K562 (cell line): ENCODE measurements at regions of chr19 and their contacts with region 1.

Region 1: DNA sequence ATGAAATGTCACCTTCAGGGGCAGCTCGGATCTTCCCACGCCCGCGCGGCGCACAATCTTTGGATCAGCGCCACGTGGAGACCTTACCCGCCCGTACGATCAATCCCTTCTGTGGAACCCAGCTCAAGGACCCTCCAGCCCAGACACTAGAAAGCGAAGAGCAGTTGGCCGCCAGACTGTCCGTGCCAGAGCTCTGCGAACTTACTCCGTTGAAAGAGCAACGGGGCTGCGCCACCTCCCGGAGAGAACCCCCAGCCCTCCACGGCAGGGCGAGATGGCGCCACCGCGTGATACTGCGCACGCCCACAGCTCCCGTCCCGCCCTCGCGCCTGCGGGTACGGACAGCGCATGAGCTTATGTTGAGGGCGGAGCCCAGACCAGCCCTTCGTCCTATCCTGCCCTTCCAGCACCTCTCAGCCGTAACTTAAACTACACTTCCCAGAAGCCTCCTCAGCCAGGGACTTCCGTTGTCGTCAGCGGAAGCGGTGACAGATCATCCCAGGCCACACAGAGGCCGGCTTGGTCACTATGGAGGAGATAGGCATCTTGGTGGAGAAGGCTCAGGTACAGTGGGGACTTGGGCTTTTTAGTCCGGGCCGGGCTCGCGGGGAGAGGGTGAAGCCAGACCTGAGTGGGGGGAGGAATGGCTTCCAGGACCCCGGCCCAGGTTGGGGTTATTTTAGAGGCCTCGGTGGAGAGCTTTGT is at the start of gene PSMC4:
- DNase-seq: peak; percentile 95 to 99 (median 96)
- ATAC-seq: peak; percentile 99
- H3K4me3 ChIP-seq: peak within 1 kb of the TSS; percentile 84
- H3K27ac ChIP-seq: peak within 1 kb of the TSS; percentile 90
- H3K4me1 ChIP-seq: peaks cover 15 to 23% of the 10 kb centered on the region in 2 experiments
- H3K27me3 ChIP-seq: no peaks in the 10 kb centered on the region
- CTCF ChIP-seq: peak; percentile 90 to 97 (median 94)
- EP300 ChIP-seq: no peak
- POLR2A ChIP-seq: peak; percentile 94
- RAD21 ChIP-seq: peak; percentile 84 to 88
- polyA plus RNA-seq, gene PSMC4: 380 to 475 TPM

Region 2: DNA sequence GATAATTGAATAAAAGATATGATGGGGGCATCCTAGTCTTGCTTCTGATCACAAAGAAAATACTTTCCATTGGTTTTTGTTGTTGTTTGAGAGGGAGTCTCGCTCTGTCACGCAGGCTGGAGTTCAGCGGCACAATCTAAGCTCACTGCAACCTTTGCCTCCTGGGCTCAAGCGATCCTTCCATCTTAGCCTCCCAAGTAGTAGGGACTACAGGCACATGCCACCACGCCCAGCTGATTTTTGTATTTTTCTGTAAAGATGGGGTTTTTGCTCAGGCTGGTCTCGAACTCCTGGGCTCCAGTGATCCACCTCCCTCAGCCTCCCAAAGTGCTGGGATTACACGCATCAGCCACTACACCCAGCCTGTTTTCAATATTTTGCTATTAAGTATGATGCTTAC is 16.9 kb before region 1 on chr19:
- CTCF ChIA-PET with region 1: no interaction called
- POLR2A ChIA-PET with region 1: interaction called, 10 read pairs
- in situ Hi-C with region 1: no loop called
- intact Hi-C with region 1: no loop called
- DNase-seq: no peak
- ATAC-seq: no peak
- H3K4me3 ChIP-seq: no peak overlapping the region
- H3K27ac ChIP-seq: no peak overlapping the region
- H3K4me1 ChIP-seq: no peaks in the 10 kb centered on the region
- H3K27me3 ChIP-seq: peaks cover 3% of the 10 kb centered on the region in 2 experiments; a peak in 2 of 5 replicates
- CTCF ChIP-seq: no peak
- EP300 ChIP-seq: no peak
- POLR2A ChIP-seq: no peak
- RAD21 ChIP-seq: no peak

Region 3: DNA sequence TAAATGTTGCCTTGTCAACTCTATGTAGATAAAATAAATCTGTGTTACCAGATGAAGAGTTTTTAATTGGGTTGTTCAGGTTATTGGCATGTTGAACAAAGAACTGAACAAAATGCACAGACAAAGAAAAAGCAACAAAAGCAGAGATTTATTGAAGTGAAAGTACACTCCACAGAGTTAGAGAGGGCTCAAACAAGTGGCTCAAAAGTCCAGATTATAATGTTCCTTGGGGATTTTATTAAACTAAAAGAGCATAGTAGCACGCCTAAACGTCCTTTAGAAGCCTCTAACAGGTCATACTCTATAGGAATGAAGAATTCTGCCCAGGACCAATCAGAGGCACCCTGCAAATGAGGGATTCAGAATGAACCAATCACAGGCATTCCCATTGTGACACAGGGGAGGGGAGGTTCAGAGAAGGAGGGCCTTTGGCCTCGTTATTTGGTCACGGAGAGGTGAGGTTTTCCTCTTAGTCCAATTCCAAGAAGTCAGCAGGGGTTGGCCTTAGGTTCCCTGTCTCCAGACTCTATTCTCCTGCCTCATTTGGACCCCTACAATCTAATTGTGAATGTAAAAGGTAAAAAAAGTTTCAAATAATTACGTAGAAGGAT is 13.0 kb after region 1 on chr19:
- CTCF ChIA-PET with region 1: no interaction called
- POLR2A ChIA-PET with region 1: interaction called, 23 read pairs
- in situ Hi-C with region 1: no loop called
- intact Hi-C with region 1: no loop called
- DNase-seq: peak in 3 of 4 experiments; percentile 46 to 59 (median 47)
- ATAC-seq: peak; percentile 26; the same call in 1 of the 3 replicates
- H3K4me3 ChIP-seq: no peak overlapping the region
- H3K27ac ChIP-seq: no peak overlapping the region
- H3K4me1 ChIP-seq: 0 out of 5 replicates have a peak, but pooled peaks cover 0 to 3% of the 10 kb centered on the region in 2 experiments
- H3K27me3 ChIP-seq: no peaks in the 10 kb centered on the region
- CTCF ChIP-seq: no peak
- EP300 ChIP-seq: no peak
- POLR2A ChIP-seq: no peak; the same call in 1 of the 2 replicates
- RAD21 ChIP-seq: no peak